IMR-90 (cell line): ENCODE measurements at regions of chr1 and their contacts with region 1.

Region 1: DNA sequence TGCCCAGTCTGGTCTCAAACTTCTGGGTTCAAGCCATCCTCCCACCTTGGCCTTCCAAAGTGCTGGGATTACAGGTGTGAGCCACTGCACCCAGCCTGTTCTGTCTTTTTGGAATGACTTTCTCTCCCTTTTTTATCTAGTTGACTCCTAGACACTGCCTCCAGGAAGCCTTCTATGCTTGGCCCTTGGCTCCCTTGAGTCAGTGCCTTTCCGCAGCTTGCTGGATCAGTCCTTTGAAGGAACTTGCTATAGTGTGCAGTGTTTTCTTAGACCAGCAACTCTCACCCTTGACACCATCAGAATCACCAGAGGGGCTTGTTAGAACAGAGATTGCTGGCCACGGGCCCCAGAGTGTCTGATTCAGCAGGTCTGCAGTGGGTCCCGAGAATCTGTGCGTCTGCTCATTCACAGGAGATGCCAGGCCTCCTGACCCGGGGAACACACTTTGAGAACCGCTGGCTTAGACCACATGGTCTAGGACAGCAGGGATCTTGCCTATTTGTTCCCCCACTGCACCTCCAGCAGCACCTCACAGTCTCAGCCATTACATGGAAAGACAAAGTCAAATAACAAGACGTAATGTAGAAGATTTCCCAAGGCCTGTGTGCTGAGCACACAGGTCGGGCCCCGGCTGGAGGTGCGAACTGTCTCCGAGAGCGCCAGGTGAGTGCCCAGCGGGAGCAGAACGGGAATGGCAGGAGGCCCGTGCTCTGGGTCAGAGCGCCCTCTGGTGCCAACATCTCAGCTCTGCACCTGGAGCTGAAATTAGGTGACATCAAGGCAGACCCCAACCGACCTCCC is 27.4 kb upstream of the CTPS1 start:
- DNase-seq: peak; percentile 29
- ATAC-seq: peak; percentile 83
- H3K4me3 ChIP-seq: no peak overlapping the region
- H3K27ac ChIP-seq: no peak overlapping the region
- H3K4me1 ChIP-seq: peaks cover 2% of the 10 kb centered on the region
- H3K27me3 ChIP-seq: no peaks in the 10 kb centered on the region
- CTCF ChIP-seq: peak; percentile 90
- POLR2A ChIP-seq: 0 out of 2 replicates have a peak, but pooled peaks have one; percentile 35
- RAD21 ChIP-seq: peak; percentile 97

Region 2: DNA sequence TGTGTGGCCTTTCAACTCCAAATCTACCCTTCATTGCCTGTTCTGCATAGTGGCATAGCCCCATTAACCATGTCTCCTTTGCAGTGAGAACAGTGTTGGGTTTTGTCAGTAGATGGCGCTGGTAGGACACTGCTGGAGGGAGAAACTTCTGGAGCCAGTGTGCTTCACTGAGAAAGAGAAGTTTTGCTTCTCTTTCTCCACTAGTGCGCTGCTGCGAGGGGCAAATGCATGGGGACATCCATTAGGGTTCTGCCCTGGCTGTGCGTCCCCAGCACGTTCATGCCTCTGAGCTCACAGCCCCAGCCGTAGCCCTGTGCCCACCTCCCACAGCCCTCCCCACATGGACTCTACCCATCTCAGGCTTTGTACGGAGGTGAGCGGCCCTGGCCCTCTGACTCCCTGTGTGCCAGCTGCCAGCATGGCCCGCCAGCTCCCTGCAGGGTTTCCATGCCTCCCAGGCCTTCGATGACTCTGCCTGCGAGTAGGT is 339.8 kb before region 1 on chr1:
- CTCF ChIA-PET with region 1: no interaction called
- POLR2A ChIA-PET with region 1: no interaction called
- dilution Hi-C with region 1: no loop called
- in situ Hi-C with region 1: no loop called
- intact Hi-C with region 1: loop called (anchors 2 kb)
- DNase-seq: peak; percentile 52
- ATAC-seq: peak; percentile 97
- H3K4me3 ChIP-seq: no peak overlapping the region
- H3K27ac ChIP-seq: no peak overlapping the region
- H3K4me1 ChIP-seq: no peaks in the 10 kb centered on the region
- H3K27me3 ChIP-seq: peaks cover 4% of the 10 kb centered on the region; the same call in 1 of the 2 replicates
- CTCF ChIP-seq: peak; percentile 84
- POLR2A ChIP-seq: no peak
- RAD21 ChIP-seq: peak; percentile 87

Region 3: GRCh38 chr1:40630488-40631381 is 321.4 kb before region 1 on chr1:
- CTCF ChIA-PET with region 1: no interaction called
- POLR2A ChIA-PET with region 1: no interaction called
- dilution Hi-C with region 1: no loop called
- in situ Hi-C with region 1: loop called (anchors 25 kb)
- intact Hi-C with region 1: no loop called
- DNase-seq: peak; percentile 19
- ATAC-seq: peak; percentile 75
- H3K4me3 ChIP-seq: no peak overlapping the region
- H3K27ac ChIP-seq: no peak overlapping the region
- H3K4me1 ChIP-seq: no peaks in the 10 kb centered on the region
- H3K27me3 ChIP-seq: peaks cover 10% of the 10 kb centered on the region; the same call in 1 of the 2 replicates
- CTCF ChIP-seq: peak; percentile 47
- POLR2A ChIP-seq: no peak
- RAD21 ChIP-seq: peak; percentile 48

Region 4: DNA sequence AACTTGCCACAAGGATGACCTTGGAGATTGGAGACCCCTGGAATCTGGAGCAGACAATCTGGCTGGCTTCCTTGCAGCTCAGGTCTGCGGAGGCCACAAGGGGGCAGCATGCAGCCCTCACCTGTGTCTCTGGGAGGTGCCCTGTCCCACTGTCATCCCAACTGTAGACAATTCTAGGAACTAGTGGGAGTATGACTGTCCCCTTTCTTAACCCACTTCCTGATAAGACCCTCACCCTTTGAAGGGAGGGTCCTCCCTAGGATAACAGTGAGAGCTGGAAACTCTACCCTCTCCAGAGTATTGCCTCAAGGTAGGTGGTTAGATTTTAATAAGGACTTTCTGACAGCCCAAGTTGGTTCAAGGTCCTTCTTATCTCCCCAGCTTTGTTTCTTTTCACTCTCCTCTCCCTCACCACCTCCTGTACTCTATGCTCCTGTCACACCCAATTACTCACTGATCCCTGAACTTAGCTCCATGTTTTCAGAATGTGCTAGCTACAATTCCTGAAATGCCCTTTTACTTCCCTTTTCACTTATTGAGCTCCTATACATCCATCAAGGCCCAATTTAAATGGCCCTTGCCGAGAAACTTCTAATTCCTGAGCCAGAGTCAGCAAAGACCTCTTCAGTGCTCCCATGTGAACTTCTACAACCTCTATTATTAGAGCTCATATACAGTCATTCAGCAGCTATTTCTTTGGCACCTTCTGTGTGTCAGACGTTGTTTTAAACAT is 177.7 kb before region 1 on chr1:
- CTCF ChIA-PET with region 1: interaction called, 3 read pairs
- POLR2A ChIA-PET with region 1: no interaction called
- dilution Hi-C with region 1: no loop called
- in situ Hi-C with region 1: no loop called
- intact Hi-C with region 1: loop called (anchors 5 kb)
- DNase-seq: peak; percentile 20
- ATAC-seq: no peak; the same call in 1 of the 2 replicates
- H3K4me3 ChIP-seq: no peak overlapping the region
- H3K27ac ChIP-seq: no peak overlapping the region
- H3K4me1 ChIP-seq: peaks cover 3% of the 10 kb centered on the region; the same call in 1 of the 2 replicates
- H3K27me3 ChIP-seq: no peaks in the 10 kb centered on the region
- CTCF ChIP-seq: peak; percentile 55
- POLR2A ChIP-seq: no peak
- RAD21 ChIP-seq: peak; percentile 50

Region 5: DNA sequence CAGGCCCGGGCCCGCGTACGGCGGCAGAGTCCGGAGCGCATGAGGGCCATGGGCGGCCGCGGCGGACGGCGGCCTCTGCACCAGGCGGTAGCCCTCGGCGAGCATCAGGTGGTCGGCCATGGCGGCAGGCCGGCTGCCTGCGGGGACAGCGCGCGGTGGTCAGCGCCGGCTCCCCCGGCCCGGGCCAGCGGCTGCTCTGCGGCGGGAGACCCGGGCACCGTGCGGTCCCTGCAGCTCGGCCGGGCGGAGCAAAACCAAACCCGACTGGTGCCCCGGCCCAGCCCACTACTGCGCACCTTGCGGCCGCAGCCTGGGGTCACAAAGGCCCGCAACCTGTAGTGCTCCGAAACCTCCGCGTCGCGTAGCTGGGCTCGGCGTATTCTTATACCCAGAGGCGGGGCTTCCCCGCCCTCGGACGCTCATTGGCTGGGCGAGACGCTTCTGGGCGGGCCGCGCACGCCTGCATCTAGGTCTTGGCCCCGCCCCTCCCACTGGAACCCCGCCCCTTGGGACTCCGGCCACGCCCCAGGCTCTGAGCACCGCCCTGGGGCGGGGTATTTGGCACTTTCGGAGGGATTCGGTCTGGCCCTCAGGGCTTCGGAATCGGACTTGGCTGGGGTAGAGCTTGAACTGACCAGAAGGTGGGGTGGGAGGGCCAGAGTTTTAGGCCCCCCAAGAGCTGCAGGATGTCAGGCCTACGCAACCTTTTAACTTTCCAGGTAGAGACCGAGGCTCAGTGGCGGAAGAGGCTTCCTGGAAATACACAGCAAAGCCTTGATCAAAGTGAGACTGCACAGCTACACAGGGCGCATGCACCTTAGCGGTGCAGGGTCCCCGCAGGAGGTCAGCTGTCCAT is 89.9 kb before region 1 on chr1 and contains the start of gene CITED4:
- CTCF ChIA-PET with region 1: interaction called, 19 read pairs
- POLR2A ChIA-PET with region 1: no interaction called
- dilution Hi-C with region 1: no loop called
- in situ Hi-C with region 1: no loop called
- intact Hi-C with region 1: no loop called
- DNase-seq: peak; percentile 83
- ATAC-seq: peak; percentile 98
- H3K4me3 ChIP-seq: peak within 1 kb of the TSS; percentile 76
- H3K27ac ChIP-seq: no peak within 1 kb of the TSS; the same call in 1 of the 2 replicates
- H3K4me1 ChIP-seq: peaks cover 10% of the 10 kb centered on the region
- H3K27me3 ChIP-seq: peaks cover 18% of the 10 kb centered on the region; the same call in 1 of the 2 replicates
- CTCF ChIP-seq: peak; percentile 29; the same call in 1 of the 2 replicates
- POLR2A ChIP-seq: peak; percentile 62; the same call in 1 of the 2 replicates
- RAD21 ChIP-seq: peak; percentile 36; the same call in 1 of the 2 replicates
- total RNA-seq, gene CITED4: under 0.01 and 0.28 TPM in 2 replicates